GM18951 (cell line): ENCODE measurements at regions of chr18 and their contacts with region 1.

Region 1: GRCh38 chr18:55318951-55319441 is 269.0 kb downstream of the TCF4 start:
- POLR2A ChIP-seq: no peak

Region 2: GRCh38 chr18:54357660-54358494 is 961.1 kb before region 1 on chr18 and contains the starts of genes C18orf54 and STARD6:
- in situ Hi-C with region 1: no loop called
- POLR2A ChIP-seq: peak; percentile 90

Region 3: DNA sequence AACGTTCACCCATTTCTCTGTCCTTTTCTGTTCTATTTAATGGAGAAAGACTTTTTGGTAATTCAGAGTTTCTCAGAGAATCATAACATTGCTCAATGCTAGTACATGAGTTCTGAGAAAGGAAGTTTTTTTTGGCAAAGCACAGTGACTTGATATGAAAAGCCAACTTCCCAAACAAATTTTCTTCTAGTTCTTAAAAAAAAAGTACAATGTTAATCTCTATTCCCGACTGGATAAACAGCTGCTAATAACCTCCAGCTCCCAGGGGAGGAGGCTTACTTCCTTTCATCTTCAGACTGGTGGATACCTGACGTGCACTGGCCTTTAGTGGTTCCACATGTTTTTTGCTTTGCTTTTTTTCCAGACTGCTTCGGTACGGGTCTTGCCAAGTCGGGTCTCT is 75.1 kb before region 1 on chr18:
- in situ Hi-C with region 1: loop called (anchors 10 kb)
- POLR2A ChIP-seq: no peak

Region 4: DNA sequence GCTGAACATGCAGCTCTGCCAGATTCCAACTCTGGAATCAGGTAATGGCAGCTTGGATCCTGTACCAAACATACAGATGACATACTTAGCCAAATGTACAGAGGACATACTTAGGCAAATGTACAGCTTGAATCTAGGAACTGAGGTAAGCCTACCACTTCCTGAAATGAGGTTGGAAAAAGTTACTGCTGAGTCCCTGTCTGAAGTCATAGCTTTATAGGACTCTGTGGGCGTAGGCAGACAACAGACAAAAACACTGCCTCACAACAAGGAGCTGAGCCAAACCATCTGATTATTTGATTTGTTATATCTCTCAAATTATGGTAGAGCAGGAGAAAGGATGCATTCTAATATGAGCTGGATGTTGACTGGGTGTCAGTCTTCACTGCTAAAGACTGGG is 559.2 kb after region 1 on chr18:
- in situ Hi-C with region 1: no loop called
- POLR2A ChIP-seq: no peak